GM23248 (cell line): ENCODE measurements at regions of chr6 and their contacts with region 1.

Region 1: GRCh38 chr6:87929843-87930288 is 117.8 kb upstream of the SPACA1 start:
- DNase-seq: peak; percentile 91
- H3K4me3 ChIP-seq: peak overlapping the region; percentile 19; the same call in 1 of the 2 replicates
- H3K27ac ChIP-seq: no peak overlapping the region
- H3K4me1 ChIP-seq: peaks cover 3% of the 10 kb centered on the region; the same call in 1 of the 2 replicates
- H3K27me3 ChIP-seq: peaks cover 25% of the 10 kb centered on the region; the same call in 1 of the 2 replicates

Region 2: DNA sequence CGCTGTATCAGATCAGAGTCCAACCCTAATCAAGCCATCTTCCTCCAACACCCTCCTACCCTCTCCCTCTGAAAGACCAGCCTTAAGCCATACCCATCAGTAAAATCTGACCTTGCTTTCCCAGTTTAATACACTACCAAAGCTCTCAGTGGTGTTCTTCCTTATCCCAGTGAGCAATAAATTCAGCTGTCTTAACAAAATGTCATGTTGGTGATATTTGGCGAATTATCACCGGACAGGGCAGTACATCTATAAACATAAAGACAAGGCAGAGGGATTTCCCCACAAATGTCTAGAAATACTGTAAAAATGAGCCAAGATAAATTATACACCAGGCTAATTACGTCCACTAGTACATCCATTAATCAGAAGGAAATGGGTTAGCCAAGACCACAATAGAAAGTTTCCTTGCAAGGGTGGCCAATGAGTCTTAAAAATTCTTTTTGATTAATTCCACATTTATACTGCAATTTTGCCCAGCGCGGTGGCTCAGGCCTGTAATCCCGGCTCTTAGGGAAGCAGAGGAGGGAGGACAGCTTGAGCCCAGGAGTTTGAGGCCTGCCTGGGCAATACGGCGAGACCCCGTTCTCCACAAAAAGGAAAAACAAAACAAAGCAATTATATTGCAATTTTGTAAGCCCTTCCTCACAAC is 341.0 kb before region 1 on chr6:
- in situ Hi-C with region 1: no loop called
- DNase-seq: peak; percentile 64
- H3K4me3 ChIP-seq: peak overlapping the region; percentile 85
- H3K27ac ChIP-seq: peak overlapping the region; percentile 91
- H3K4me1 ChIP-seq: peaks cover 24% of the 10 kb centered on the region
- H3K27me3 ChIP-seq: no peaks in the 10 kb centered on the region

Region 3: GRCh38 chr6:88179692-88180091 is 249.8 kb after region 1 on chr6:
- in situ Hi-C with region 1: no loop called
- DNase-seq: no peak
- H3K4me3 ChIP-seq: no peak overlapping the region
- H3K27ac ChIP-seq: no peak overlapping the region
- H3K4me1 ChIP-seq: no peaks in the 10 kb centered on the region
- H3K27me3 ChIP-seq: no peaks in the 10 kb centered on the region; the same call in none of the 2 replicates

Region 4: DNA sequence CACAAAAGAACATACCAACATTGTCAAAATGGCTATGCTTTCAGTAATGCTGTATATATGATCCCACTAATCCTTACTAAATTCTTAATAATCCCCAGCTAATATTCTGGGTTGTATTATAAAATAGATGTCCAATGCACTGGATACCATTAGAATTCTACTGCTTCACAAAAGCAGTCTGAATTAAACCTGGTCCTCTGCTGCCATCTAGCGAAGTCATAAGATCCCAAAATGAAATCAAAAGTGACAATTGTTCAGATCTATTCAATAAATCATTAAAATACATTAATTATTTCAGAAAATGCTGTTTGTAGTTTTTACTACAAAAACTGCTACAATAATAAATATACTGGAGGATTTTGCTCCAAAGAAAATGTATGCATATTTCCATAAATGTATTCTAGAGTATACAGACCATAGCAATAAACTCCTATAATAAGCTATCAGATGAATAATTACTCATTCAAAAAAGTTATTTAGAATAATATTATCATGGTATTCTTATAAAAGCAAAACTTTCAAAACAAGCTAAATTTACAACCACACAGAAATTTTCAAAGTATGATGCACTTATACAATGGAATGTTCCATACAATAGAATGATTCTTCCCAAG is 941.0 kb after region 1 on chr6:
- in situ Hi-C with region 1: loop called (anchors 25 kb)
- DNase-seq: peak; percentile 70
- H3K4me3 ChIP-seq: no peak overlapping the region
- H3K27ac ChIP-seq: no peak overlapping the region
- H3K4me1 ChIP-seq: peaks cover 31% of the 10 kb centered on the region
- H3K27me3 ChIP-seq: no peaks in the 10 kb centered on the region